ENCODE measurements at regions of chr7 and their contacts with region 1.

Region 1: GRCh38 chr7:148395990-148396716 is 194.4 kb upstream of the C7orf33 start:
- DNase-seq: no peak
- H3K4me3 ChIP-seq: no peak overlapping the region
- H3K4me3 Mint-ChIP-seq: no peak overlapping the region
- H3K27ac Mint-ChIP-seq: peak overlapping the region; percentile 54
- H3K4me1 ChIP-seq: no peaks in the 10 kb centered on the region
- H3K4me1 Mint-ChIP-seq: no peaks in the 10 kb centered on the region
- H3K27me3 ChIP-seq: no peaks in the 10 kb centered on the region
- H3K27me3 Mint-ChIP-seq: no peaks in the 10 kb centered on the region
- CTCF ChIP-seq: no peak

Region 2: GRCh38 chr7:148296994-148297644 is 99.0 kb before region 1 on chr7:
- CTCF ChIA-PET with region 1: no interaction called
- POLR2A ChIA-PET with region 1: no interaction called
- intact Hi-C with region 1: no loop called
- DNase-seq: peak in 1 of 2 experiments; percentile 11
- H3K4me3 ChIP-seq: no peak overlapping the region
- H3K4me3 Mint-ChIP-seq: no peak overlapping the region
- H3K27ac Mint-ChIP-seq: peak overlapping the region; percentile 42
- H3K4me1 ChIP-seq: peaks cover 33% of the 10 kb centered on the region
- H3K4me1 Mint-ChIP-seq: peaks cover 11% of the 10 kb centered on the region
- H3K27me3 ChIP-seq: no peaks in the 10 kb centered on the region
- H3K27me3 Mint-ChIP-seq: no peaks in the 10 kb centered on the region
- CTCF ChIP-seq: peak in 1 of 2 experiments; percentile 20

Region 3: GRCh38 chr7:148356303-148356702 is 39.9 kb before region 1 on chr7:
- CTCF ChIA-PET with region 1: no interaction called
- POLR2A ChIA-PET with region 1: no interaction called
- intact Hi-C with region 1: loop called (anchors 1 kb)
- DNase-seq: no peak
- H3K4me3 ChIP-seq: no peak overlapping the region
- H3K4me3 Mint-ChIP-seq: no peak overlapping the region
- H3K27ac Mint-ChIP-seq: no peak overlapping the region
- H3K4me1 ChIP-seq: 0 out of 2 replicates have a peak, but pooled peaks cover 3% of the 10 kb centered on the region
- H3K4me1 Mint-ChIP-seq: no peaks in the 10 kb centered on the region
- H3K27me3 ChIP-seq: no peaks in the 10 kb centered on the region
- H3K27me3 Mint-ChIP-seq: no peaks in the 10 kb centered on the region
- CTCF ChIP-seq: no peak

Region 4: DNA sequence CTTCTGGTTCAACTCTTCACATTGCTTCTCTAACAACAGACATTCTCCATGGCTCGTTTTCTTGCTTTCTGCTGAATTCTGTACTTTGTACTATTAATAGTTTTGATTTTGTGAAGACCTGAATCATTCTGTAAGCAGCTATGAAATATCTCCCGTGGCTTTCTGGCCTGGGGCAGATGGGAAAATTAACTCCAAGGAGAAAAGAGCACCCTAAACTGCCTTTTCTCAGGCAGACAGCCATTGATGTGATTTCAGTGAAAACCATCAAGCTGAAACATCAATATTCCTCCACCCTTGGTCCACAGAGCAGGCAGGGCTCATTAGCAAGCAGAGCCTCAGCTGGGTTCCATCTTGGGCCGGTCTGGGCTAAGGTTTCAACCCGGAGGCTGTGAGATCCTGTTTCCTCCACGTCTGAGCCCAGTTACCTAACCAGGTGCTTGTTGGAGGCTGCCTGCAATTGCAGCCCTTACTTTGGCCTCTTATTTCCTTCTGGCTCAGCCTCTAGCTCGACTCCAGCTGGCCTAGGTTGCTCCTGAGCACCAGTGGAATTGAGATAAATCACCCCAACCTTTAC is 509.0 kb after region 1 on chr7:
- CTCF ChIA-PET with region 1: no interaction called
- POLR2A ChIA-PET with region 1: no interaction called
- intact Hi-C with region 1: no loop called
- DNase-seq: no peak
- H3K4me3 ChIP-seq: no peak overlapping the region
- H3K4me3 Mint-ChIP-seq: no peak overlapping the region
- H3K27ac Mint-ChIP-seq: no peak overlapping the region
- H3K4me1 ChIP-seq: peaks cover 5% of the 10 kb centered on the region; the same call in 1 of the 2 replicates
- H3K4me1 Mint-ChIP-seq: peaks cover 8% of the 10 kb centered on the region
- H3K27me3 ChIP-seq: no peaks in the 10 kb centered on the region; the same call in 1 of the 2 replicates
- H3K27me3 Mint-ChIP-seq: peaks cover 11% of the 10 kb centered on the region
- CTCF ChIP-seq: no peak